ENCODE measurements at regions of chr15 and their contacts with region 1.

Region 1: DNA sequence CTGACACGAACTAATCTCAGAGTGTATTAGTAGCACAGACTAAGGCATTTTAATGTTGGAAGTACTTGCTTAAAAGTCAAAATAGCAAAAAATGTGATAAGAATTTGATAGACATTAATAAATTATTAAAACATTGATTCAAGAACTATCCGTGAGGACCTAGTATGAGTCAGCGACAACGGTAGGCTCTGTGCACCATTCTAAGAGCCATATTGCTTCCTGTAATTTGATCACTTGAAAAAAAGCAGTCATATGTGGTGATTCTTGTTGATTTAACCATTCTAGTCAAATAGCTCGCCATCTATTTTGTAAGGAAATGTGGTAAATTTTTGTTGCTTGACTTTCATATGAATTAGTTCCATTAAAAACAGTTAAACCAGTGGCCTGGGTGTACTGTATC is 534.9 kb upstream of the ARRDC4 start:
- DNase-seq: no peak
- H3K4me3 ChIP-seq: no peak overlapping the region
- H3K27ac ChIP-seq: no peak overlapping the region
- H3K4me1 ChIP-seq: no peaks in the 10 kb centered on the region
- CTCF ChIP-seq: no peak

Region 2: GRCh38 chr15:97386940-97387339 is 38.7 kb before region 1 on chr15:
- CTCF ChIA-PET with region 1: no interaction called
- POLR2A ChIA-PET with region 1: interaction called, 10 read pairs
- intact Hi-C with region 1: no loop called
- DNase-seq: no peak
- H3K4me3 ChIP-seq: no peak overlapping the region
- H3K27ac ChIP-seq: no peak overlapping the region
- H3K4me1 ChIP-seq: no peaks in the 10 kb centered on the region
- CTCF ChIP-seq: no peak

Region 3: GRCh38 chr15:97463696-97464095 is 38.1 kb after region 1 on chr15:
- CTCF ChIA-PET with region 1: no interaction called
- POLR2A ChIA-PET with region 1: no interaction called
- intact Hi-C with region 1: no loop called
- DNase-seq: no peak
- H3K4me3 ChIP-seq: no peak overlapping the region
- H3K27ac ChIP-seq: no peak overlapping the region
- H3K4me1 ChIP-seq: no peaks in the 10 kb centered on the region
- CTCF ChIP-seq: no peak

Region 4: DNA sequence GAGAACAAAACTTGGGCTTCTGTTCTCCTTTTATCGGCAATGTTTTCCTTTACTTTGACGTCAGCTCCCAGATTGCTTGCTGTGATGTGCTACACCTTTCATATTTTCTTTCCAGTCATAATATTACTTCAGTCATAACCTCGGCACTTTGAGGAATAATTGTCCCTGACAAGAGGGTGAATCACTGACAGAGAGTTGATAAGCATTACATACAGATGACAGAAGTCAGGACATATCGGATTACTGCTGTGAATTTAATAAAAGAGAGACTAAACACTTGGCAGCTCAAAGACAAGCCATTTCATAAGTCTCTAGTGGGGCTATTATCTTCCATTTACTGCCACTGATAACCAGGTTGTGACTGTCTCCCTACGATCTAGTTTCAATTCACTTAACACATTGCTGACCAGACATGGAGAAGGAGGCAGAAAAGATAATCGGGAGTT is 172.8 kb after region 1 on chr15:
- CTCF ChIA-PET with region 1: no interaction called
- POLR2A ChIA-PET with region 1: no interaction called
- intact Hi-C with region 1: no loop called
- DNase-seq: no peak
- H3K4me3 ChIP-seq: no peak overlapping the region
- H3K27ac ChIP-seq: no peak overlapping the region
- H3K4me1 ChIP-seq: no peaks in the 10 kb centered on the region
- CTCF ChIP-seq: no peak

Measured in OCI-LY7 (cell line).